A549 (cell line): ENCODE measurements at regions of chr11 and their contacts with region 1.

Region 1: DNA sequence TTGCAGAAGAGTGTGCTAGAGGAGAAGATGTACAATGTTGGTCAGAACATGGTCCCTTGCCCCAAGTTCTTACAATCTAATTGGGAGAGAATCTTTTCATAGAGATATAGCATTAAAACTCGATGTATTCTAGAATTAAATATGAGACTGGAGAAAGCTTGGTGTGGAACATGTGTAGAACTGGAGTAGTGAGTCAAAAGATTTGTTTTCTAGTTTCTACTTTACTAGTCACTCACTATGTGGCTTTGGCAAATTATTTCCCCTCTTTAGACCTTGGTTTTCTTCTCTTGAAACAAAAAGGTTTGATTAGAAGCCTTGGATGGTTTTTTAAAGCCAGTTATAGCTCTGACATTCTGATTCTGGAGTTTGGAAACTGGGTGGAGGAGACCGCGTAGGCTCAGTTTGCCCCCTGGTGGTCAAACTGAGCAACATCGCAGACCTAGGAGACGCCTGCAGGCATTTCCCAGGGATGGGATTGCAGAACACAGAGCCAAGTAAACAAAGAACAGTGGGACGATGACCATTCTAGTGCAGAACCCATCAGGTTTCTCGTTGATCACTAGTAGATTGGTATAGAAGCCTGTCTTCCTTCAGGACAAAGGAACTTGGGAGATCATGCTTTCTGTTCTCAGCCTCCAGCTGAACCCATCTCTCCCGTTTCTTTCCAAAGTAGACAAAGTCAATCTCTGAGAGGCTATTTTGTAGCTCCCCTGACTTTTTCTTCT is 8.5 kb upstream of the CHRDL2 start:
- DNase-seq: peak; percentile 74 to 87
- ATAC-seq: peak; percentile 96 to 97
- H3K4me3 ChIP-seq: no peak overlapping the region
- H3K27ac ChIP-seq: peak overlapping the region in 1 of 2 experiments; percentile 16; a peak in 1 of 6 replicates
- H3K4me1 ChIP-seq: 0 out of 3 replicates have a peak, but pooled peaks cover 4% of the 10 kb centered on the region
- CTCF ChIP-seq: peak; percentile 94
- EP300 ChIP-seq: no peak
- POLR2A ChIP-seq: no peak
- RAD21 ChIP-seq: peak; percentile 86 to 88

Region 2: DNA sequence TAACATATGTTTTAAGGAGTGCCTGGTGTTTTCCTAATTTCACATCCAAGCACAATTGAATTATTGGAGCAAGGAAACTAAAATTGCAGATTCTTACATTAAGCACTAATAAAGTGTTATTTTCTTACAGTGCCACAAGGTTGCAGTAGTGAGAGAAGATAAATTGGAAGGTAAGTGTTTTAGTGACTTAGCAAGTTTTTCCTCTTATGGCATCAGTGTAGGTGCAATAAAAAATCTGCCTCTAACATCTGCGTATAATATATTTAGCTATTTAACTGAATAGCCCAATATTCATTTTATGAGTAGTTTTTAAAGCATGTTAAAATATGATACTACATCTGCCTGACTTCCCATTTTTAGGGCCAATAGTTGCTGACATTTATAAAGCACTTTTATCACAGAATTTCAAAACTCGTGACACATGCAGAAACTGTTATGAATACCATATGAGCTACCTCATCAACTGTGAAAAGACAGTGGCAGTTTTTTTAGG is 128.3 kb before region 1 on chr11:
- CTCF ChIA-PET with region 1: interaction called, 22 read pairs
- POLR2A ChIA-PET with region 1: no interaction called
- DNase-seq: peak; percentile 18 to 82
- ATAC-seq: peak; percentile 69 to 78
- H3K4me3 ChIP-seq: no peak overlapping the region
- H3K27ac ChIP-seq: peak overlapping the region; percentile 66 to 79
- H3K4me1 ChIP-seq: peaks cover 22% of the 10 kb centered on the region
- CTCF ChIP-seq: peak; percentile 65
- EP300 ChIP-seq: no peak
- POLR2A ChIP-seq: no peak
- RAD21 ChIP-seq: peak; percentile 53 to 67

Region 3: GRCh38 chr11:74641289-74641688 is 98.4 kb before region 1 on chr11:
- CTCF ChIA-PET with region 1: interaction called, 27 read pairs
- POLR2A ChIA-PET with region 1: no interaction called
- DNase-seq: no peak
- ATAC-seq: no peak
- H3K4me3 ChIP-seq: no peak overlapping the region
- H3K27ac ChIP-seq: no peak overlapping the region
- H3K4me1 ChIP-seq: peaks cover 9% of the 10 kb centered on the region
- CTCF ChIP-seq: no peak
- EP300 ChIP-seq: no peak
- POLR2A ChIP-seq: no peak
- RAD21 ChIP-seq: no peak

Region 4: GRCh38 chr11:74702383-74703007 is 37.2 kb before region 1 on chr11:
- CTCF ChIA-PET with region 1: interaction called, 31 read pairs
- POLR2A ChIA-PET with region 1: no interaction called
- DNase-seq: peak; percentile 75 to 84
- ATAC-seq: peak; percentile 84 to 90
- H3K4me3 ChIP-seq: no peak overlapping the region
- H3K27ac ChIP-seq: peak overlapping the region; percentile 53 to 88; a peak in 5 of 6 replicates
- H3K4me1 ChIP-seq: peaks cover 21% of the 10 kb centered on the region
- CTCF ChIP-seq: peak; percentile 79
- EP300 ChIP-seq: no peak
- POLR2A ChIP-seq: no peak
- RAD21 ChIP-seq: peak; percentile 53 to 67

Region 5: DNA sequence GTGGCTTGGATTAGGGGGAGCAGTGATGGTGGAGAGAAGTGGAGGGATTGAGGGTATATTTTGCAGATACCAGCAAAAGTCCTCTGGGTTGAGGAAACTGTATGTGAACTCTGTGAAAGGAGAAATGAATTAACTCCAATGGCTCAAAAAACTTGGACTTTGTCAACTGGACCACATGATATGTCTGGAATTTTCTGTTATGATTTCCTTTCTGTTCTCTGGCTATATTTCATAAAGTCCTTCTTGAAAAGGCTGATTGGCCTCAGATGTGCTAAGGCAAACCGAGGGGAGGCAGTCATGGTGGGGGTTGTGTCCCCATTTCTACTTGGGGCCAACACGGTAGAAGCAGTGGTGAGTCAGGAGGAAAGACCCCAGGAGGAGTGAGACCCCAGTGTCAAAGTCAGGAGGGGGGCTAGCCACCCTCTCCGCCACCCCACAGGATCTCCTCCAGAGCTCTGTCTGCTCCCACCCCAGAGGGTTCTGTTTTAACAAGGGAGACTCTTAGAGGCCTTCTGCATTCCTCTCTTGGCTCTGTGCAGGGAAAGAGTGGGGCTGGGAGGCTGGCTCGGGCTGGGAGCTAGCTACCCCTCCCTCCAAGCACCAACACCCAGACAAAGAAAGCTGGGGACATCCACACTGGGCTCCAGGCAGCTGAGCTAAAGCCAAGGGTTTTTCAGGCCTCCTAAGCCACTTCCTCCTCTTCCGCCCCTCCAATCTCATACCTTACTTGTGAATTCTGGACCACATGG is 22.3 kb before region 1 on chr11:
- CTCF ChIA-PET with region 1: interaction called, 98 read pairs
- POLR2A ChIA-PET with region 1: no interaction called
- DNase-seq: no peak
- ATAC-seq: no peak
- H3K4me3 ChIP-seq: no peak overlapping the region
- H3K27ac ChIP-seq: peak overlapping the region in 1 of 2 experiments; percentile 10; a peak in 1 of 6 replicates
- H3K4me1 ChIP-seq: no peaks in the 10 kb centered on the region
- CTCF ChIP-seq: no peak
- EP300 ChIP-seq: no peak
- POLR2A ChIP-seq: no peak
- RAD21 ChIP-seq: no peak